ENCODE measurements at regions of chr9 and their contacts with region 1.

Region 1: GRCh38 chr9:99819856-99820684 is 1.6 kb upstream of the NR4A3 start:
- DNase-seq: peak; percentile 95 to 99
- ATAC-seq: peak; percentile 85
- H3K4me3 ChIP-seq: peak overlapping the region; percentile 52 to 77
- H3K27ac ChIP-seq: peak overlapping the region; percentile 78 to 83
- H3K4me1 ChIP-seq: no peaks in the 10 kb centered on the region
- H3K27me3 ChIP-seq: no peaks in the 10 kb centered on the region

Region 2: GRCh38 chr9:98255578-98256296 is 1564.3 kb before region 1 on chr9 and contains the start of gene TBC1D2:
- intact Hi-C with region 1: loop called in 1 of 2 experiments (anchors 10 kb)
- DNase-seq: peak; percentile 97 to 98
- ATAC-seq: peak; percentile 99
- H3K4me3 ChIP-seq: peak within 1 kb of the TSS; percentile 77 to 92
- H3K27ac ChIP-seq: peak within 1 kb of the TSS; percentile 23 to 94
- H3K4me1 ChIP-seq: no peaks in the 10 kb centered on the region
- H3K27me3 ChIP-seq: no peaks in the 10 kb centered on the region
- total RNA-seq, gene TBC1D2: 9.7 to 12.4 TPM

Region 3: DNA sequence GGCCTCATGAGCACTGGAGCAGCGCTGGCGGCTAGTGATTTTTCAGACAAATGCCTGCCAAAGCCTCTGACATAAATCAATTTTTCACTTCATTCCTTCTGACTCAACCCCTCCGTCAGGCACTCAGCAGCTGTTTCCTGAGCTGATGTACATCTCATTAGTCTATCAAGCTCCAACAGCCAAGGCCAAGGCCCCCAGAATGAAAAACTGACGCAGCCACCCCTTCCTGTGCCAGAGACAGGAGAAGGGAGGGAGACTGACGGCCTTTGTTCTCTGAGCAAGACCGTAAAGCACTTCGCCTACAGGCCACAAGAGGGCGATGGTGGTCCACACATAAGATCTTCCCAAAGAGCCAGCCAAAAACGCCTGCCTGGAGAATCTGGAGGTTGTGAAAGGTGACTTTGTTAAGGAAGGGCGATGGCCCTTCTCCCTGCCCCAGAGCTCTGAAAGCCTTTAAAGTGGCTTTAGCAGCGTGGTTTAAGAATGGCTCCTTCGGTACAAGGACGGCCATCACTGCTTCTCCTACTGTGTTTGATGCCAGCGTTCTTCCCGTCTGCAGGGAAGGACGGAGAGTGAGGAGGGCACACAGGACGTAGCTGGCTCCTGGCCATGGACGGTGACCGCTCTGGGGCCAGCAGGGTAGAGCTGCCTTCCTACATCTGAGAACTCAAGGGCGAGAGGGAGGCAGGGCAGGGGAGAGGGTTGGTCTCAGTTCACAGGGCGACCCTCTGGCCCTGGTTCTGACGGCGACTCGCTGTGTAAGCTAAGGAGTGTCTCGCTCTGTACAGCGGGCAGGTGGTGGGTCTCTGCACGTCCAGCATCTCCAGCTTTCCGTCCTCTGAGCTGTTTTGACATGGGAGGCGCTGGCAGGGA is 635.4 kb before region 1 on chr9:
- intact Hi-C with region 1: loop called in 1 of 2 experiments (anchors 10 kb)
- DNase-seq: peak; percentile 90 to 93
- ATAC-seq: peak; percentile 93
- H3K4me3 ChIP-seq: no peak overlapping the region
- H3K27ac ChIP-seq: no peak overlapping the region
- H3K4me1 ChIP-seq: no peaks in the 10 kb centered on the region
- H3K27me3 ChIP-seq: no peaks in the 10 kb centered on the region

Region 4: GRCh38 chr9:99266255-99267023 is 553.6 kb before region 1 on chr9:
- intact Hi-C with region 1: loop called in 1 of 2 experiments (anchors 10 kb)
- DNase-seq: peak; percentile 74 to 90
- ATAC-seq: peak; percentile 79
- H3K4me3 ChIP-seq: no peak overlapping the region
- H3K27ac ChIP-seq: no peak overlapping the region
- H3K4me1 ChIP-seq: no peaks in the 10 kb centered on the region
- H3K27me3 ChIP-seq: no peaks in the 10 kb centered on the region

Region 5: DNA sequence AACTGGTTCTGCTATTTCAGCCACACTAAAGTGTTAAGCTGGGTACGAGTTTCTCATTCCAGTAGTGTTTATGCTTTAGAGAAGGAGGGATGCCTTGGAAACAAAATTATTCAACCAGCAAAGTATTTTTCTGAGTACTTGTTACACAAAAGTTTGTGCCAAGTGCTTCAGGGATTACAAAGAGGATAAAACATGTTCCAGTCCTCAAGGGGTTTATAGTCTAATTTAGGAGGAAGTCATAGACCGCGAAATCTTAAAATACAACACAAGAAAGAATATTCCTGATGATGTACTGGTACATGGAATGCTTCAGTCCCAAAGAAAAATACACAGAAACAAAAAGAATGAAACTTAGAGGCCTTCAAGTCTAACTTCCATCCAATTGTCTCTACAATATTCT is 83.8 kb before region 1 on chr9:
- intact Hi-C with region 1: no loop called
- DNase-seq: no peak
- ATAC-seq: no peak
- H3K4me3 ChIP-seq: no peak overlapping the region
- H3K27ac ChIP-seq: no peak overlapping the region
- H3K4me1 ChIP-seq: peaks cover 0 to 4% of the 10 kb centered on the region in 2 donors
- H3K27me3 ChIP-seq: no peaks in the 10 kb centered on the region

Region 6: DNA sequence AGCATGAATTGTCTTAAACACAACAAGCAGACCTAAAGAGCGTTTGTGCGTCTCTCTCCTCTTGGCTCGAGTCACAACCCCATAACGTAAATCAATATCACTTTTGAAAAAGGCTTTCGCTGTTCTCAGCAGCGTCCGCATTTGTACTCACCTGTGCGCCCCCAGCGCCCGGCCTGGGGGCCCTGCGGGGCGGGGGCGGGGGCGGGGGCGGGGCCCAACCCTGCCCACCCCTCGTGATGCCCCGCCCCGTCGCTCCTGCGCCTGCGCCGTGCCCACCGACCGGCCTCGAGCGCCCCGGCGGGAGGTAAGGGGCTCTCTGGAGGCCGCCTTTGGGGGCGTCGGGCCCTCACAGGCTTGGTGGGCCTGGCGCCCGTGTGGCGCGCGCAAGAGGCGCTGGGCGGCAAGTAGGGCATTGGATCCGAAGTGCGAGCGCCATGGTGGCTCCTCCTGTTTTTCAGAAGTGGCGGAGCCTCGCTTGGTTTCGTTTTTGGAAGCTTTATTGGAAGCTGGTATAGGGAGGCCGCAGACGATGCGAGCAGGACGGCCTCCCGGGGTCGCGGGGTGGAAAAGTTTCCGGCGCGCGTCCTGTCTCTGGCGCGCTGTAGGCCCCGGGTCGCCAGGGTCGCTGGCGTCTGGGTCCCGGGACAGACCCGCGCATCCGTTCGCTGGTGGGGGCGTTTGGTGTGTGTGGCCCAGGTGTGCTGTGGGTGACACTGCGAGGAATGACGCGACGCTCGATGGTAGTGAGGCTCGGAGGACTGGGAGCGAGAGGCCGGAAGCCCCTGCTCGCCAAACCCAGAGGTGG is 86.5 kb after region 1 on chr9 and contains the start of gene STX17:
- intact Hi-C with region 1: loop called (anchors 2 to 5 kb)
- DNase-seq: peak; percentile 81 to 93
- ATAC-seq: peak; percentile 97
- H3K4me3 ChIP-seq: peak within 1 kb of the TSS; percentile 78 to 88
- H3K27ac ChIP-seq: peak within 1 kb of the TSS; percentile 49 to 95
- H3K4me1 ChIP-seq: no peaks in the 10 kb centered on the region
- H3K27me3 ChIP-seq: no peaks in the 10 kb centered on the region
- total RNA-seq, gene STX17: 34.1 to 47.5 TPM

Region 7: GRCh38 chr9:100098887-100099721 is 279.0 kb after region 1 on chr9 and contains the starts of genes ERP44 and INVS:
- intact Hi-C with region 1: loop called in 1 of 2 experiments (anchors 5 kb)
- DNase-seq: peak; percentile 99 to 100
- ATAC-seq: peak; percentile 100
- H3K4me3 ChIP-seq: peak within 1 kb of the TSS; percentile 83 to 84
- H3K27ac ChIP-seq: peak within 1 kb of the TSS; percentile 63 to 84
- H3K4me1 ChIP-seq: no peaks in the 10 kb centered on the region
- H3K27me3 ChIP-seq: no peaks in the 10 kb centered on the region
- total RNA-seq, gene ERP44: 18.3 to 19.1 TPM
- total RNA-seq, gene INVS: 19.6 to 33.3 TPM